ENCODE measurements at regions of chr19 and their contacts with region 1.

Region 1: GRCh38 chr19:4052050-4052999 is 14.4 kb downstream of the ZBTB7A start:
- DNase-seq: no peak
- H3K4me3 ChIP-seq: peak overlapping the region; percentile 12 to 17
- H3K27ac ChIP-seq: peak overlapping the region; percentile 71
- H3K4me1 ChIP-seq: peaks cover 52% of the 10 kb centered on the region
- H3K27me3 ChIP-seq: no peaks in the 10 kb centered on the region
- CTCF ChIP-seq: no peak
- POLR2A ChIP-seq: no peak

Region 2: DNA sequence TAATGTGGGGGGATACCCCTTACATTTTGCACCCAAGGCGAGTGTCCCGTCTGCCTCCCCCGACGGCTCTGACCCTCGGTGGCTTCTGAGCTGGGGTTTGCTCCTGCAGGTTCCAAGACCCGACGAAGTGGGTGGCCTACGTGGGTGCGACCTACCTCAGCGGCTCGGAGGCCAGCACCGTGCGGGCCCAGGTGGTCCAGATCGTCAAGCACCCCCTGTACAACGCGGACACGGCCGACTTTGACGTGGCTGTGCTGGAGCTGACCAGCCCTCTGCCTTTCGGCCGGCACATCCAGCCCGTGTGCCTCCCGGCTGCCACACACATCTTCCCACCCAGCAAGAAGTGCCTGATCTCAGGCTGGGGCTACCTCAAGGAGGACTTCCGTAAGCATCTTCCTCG is 1644.1 kb before region 1 on chr19:
- intact Hi-C with region 1: loop called (anchors 5 kb)
- DNase-seq: no peak
- H3K4me3 ChIP-seq: no peak overlapping the region
- H3K27ac ChIP-seq: no peak overlapping the region
- H3K4me1 ChIP-seq: no peaks in the 10 kb centered on the region
- H3K27me3 ChIP-seq: no peaks in the 10 kb centered on the region
- CTCF ChIP-seq: no peak
- POLR2A ChIP-seq: no peak